BJ (cell line): ENCODE measurements at regions of chr12 and their contacts with region 1.

Region 1: GRCh38 chr12:122752464-122753318 is at the start of gene DENR:
- DNase-seq: peak; percentile 84
- H3K4me3 ChIP-seq: peak within 1 kb of the TSS; percentile 95
- H3K27me3 ChIP-seq: no peaks in the 10 kb centered on the region
- CTCF ChIP-seq: peak; percentile 85
- polyA plus RNA-seq, gene DENR: 16.1 and 33.3 TPM in 2 replicates

Region 2: DNA sequence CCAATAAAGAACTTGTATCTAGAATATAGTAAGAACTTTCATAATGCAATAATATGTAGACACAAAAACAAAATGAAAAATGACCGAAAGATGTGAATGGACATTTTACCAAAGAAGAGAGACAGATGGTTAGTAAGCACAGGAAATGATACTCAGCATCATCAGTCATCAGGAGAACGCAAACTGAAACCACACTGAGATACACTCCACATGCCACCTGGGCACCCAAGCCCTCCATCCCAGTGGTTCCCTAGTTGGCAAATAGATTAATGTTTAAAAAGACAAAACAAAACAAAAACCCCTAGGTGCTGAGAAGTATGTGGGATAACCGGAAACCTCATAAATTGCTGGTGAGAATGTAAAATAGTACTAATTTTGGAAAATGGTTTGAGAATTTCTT is 459.6 kb before region 1 on chr12:
- CTCF ChIA-PET with region 1: no interaction called
- POLR2A ChIA-PET with region 1: no interaction called
- DNase-seq: no peak
- H3K4me3 ChIP-seq: no peak overlapping the region
- H3K27me3 ChIP-seq: no peaks in the 10 kb centered on the region
- CTCF ChIP-seq: no peak

Region 3: GRCh38 chr12:122406701-122407164 is 346.0 kb before region 1 on chr12:
- CTCF ChIA-PET with region 1: no interaction called
- POLR2A ChIA-PET with region 1: interaction called, 17 read pairs
- DNase-seq: peak; percentile 70
- H3K4me3 ChIP-seq: no peak overlapping the region
- H3K27me3 ChIP-seq: no peaks in the 10 kb centered on the region
- CTCF ChIP-seq: no peak

Region 4: GRCh38 chr12:122635471-122635870 is 117.2 kb before region 1 on chr12:
- CTCF ChIA-PET with region 1: interaction called, 68 read pairs
- POLR2A ChIA-PET with region 1: no interaction called
- DNase-seq: no peak
- H3K4me3 ChIP-seq: no peak overlapping the region
- H3K27me3 ChIP-seq: no peaks in the 10 kb centered on the region
- CTCF ChIP-seq: no peak